AG04450 (cell line): ENCODE measurements at regions of chr6 and their contacts with region 1.

Region 1: GRCh38 chr6:160930547-160931377 is 60.8 kb upstream of the MAP3K4 start:
- DNase-seq: peak; percentile 52
- H3K4me3 ChIP-seq: peak overlapping the region; percentile 54
- H3K27ac ChIP-seq: no peak overlapping the region
- H3K27me3 ChIP-seq: no peaks in the 10 kb centered on the region
- CTCF ChIP-seq: peak; percentile 82

Region 2: DNA sequence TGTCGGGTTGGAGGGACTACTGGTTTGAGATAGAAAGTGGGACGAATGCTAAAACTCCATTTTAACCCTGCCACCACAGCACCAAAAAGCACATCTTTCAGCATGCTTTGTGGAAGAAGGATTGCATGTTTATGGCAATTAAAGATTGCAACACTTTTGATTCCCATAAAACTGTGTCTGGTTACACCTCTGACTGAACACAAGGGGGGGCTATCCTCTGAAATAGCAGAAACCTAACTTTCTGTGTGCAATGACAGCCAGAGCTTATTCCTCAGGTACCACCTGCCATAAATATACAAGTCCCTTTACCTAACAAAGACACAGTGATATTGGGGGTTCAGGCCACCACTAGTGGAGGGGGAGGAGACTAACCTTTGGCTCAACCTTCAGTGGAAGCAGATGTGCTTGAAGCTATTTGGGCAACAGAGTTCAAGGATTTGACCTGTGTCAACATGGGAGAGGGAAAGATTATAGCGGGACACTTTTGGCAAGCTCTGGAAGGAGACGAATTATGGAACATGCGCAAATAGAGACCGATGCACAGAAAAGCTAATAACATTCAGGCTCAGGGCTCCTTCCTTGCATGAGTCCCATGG is 238.3 kb before region 1 on chr6:
- CTCF ChIA-PET with region 1: no interaction called
- POLR2A ChIA-PET with region 1: no interaction called
- DNase-seq: no peak
- H3K4me3 ChIP-seq: no peak overlapping the region
- H3K27ac ChIP-seq: no peak overlapping the region
- H3K27me3 ChIP-seq: no peaks in the 10 kb centered on the region
- CTCF ChIP-seq: no peak

Region 3: GRCh38 chr6:160742090-160742489 is 188.7 kb before region 1 on chr6:
- CTCF ChIA-PET with region 1: no interaction called
- POLR2A ChIA-PET with region 1: no interaction called
- DNase-seq: no peak
- H3K4me3 ChIP-seq: no peak overlapping the region
- H3K27ac ChIP-seq: no peak overlapping the region
- H3K27me3 ChIP-seq: no peaks in the 10 kb centered on the region
- CTCF ChIP-seq: no peak

Region 4: GRCh38 chr6:160919723-160920440 is 10.9 kb before region 1 on chr6:
- CTCF ChIA-PET with region 1: interaction called, 24 read pairs
- POLR2A ChIA-PET with region 1: interaction called, 3 read pairs
- DNase-seq: peak; percentile 54
- H3K4me3 ChIP-seq: no peak overlapping the region
- H3K27ac ChIP-seq: no peak overlapping the region
- H3K27me3 ChIP-seq: no peaks in the 10 kb centered on the region
- CTCF ChIP-seq: no peak

Region 5: GRCh38 chr6:160950507-160950906 is 19.7 kb after region 1 on chr6:
- CTCF ChIA-PET with region 1: interaction called, 18 read pairs
- POLR2A ChIA-PET with region 1: no interaction called
- DNase-seq: no peak
- H3K4me3 ChIP-seq: no peak overlapping the region
- H3K27ac ChIP-seq: no peak overlapping the region
- H3K27me3 ChIP-seq: peaks cover 6% of the 10 kb centered on the region
- CTCF ChIP-seq: no peak

Region 6: GRCh38 chr6:160978141-160978901 is 47.6 kb after region 1 on chr6:
- CTCF ChIA-PET with region 1: interaction called, 11 read pairs
- POLR2A ChIA-PET with region 1: interaction called, 4 read pairs
- DNase-seq: no peak
- H3K4me3 ChIP-seq: no peak overlapping the region
- H3K27ac ChIP-seq: peak overlapping the region; percentile 57
- H3K27me3 ChIP-seq: no peaks in the 10 kb centered on the region
- CTCF ChIP-seq: no peak

Region 7: GRCh38 chr6:161011492-161012480 is 81.0 kb after region 1 on chr6:
- CTCF ChIA-PET with region 1: interaction called, 10 read pairs
- POLR2A ChIA-PET with region 1: no interaction called
- DNase-seq: no peak
- H3K4me3 ChIP-seq: no peak overlapping the region
- H3K27ac ChIP-seq: no peak overlapping the region
- H3K27me3 ChIP-seq: no peaks in the 10 kb centered on the region
- CTCF ChIP-seq: no peak

Region 8: DNA sequence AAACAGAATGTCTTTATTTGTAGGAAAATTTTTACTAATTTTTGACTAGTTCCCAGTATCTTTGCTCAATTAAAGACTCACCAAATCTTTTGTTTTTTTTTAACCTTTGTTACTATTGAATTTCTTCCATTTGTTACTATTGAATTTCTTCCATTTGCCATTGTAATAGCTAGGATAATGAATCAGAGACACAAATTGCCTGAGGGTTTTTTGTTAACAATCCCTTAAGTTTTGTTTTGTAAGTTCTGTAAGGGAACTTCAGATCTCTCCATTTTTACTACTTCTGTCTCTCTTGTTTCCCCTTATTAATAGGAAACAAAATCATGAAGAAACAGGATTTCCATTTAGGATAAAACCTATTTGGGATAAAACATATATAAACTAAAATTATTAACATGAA is 165.2 kb after region 1 on chr6:
- CTCF ChIA-PET with region 1: interaction called, 10 read pairs
- POLR2A ChIA-PET with region 1: no interaction called
- DNase-seq: no peak
- H3K4me3 ChIP-seq: no peak overlapping the region
- H3K27ac ChIP-seq: no peak overlapping the region
- H3K27me3 ChIP-seq: no peaks in the 10 kb centered on the region
- CTCF ChIP-seq: no peak